Heart left ventricle (tissue), 16 donors: ENCODE measurements at regions of chr10 and their contacts with region 1.

Region 1: DNA sequence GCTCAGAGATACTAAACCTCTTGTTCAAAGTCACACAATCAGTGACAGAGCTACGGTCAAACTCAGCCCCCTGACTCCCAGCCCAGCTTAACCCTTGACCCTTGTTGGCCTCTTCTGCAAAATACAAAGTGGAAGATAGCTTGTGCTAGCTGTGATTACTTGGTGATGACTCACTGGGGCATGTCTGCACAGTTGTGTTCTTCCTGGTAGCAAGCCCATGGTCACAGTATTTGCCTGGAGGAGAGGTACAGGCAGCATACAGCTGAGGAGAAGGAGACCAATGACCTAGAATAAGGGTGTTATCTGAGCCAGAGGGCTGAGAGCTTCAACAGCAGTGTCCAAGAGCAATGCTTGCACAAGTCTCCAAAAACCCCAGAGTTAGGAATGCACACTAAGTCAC is 5.7 kb upstream of the HSPA12A start:
- DNase-seq: no peak
- ATAC-seq: peak in 1 of 4 donors; percentile 16
- H3K4me3 ChIP-seq: no peak overlapping the region
- H3K27ac ChIP-seq: no peak overlapping the region
- H3K4me1 ChIP-seq: peaks cover 0 to 7% (median 3%) of the 10 kb centered on the region in 12 donors
- H3K27me3 ChIP-seq: peaks cover 0 to 16% (median 0%) of the 10 kb centered on the region in 9 donors
- CTCF ChIP-seq: no peak
- POLR2A ChIP-seq: no peak

Region 2: GRCh38 chr10:116690356-116691322 is 57.4 kb before region 1 on chr10:
- intact Hi-C with region 1: loop called in 7 of 10 experiments (anchors 2 to 5 kb)
- DNase-seq: peak in 3 of 5 donors; percentile 54 to 63 (median 58)
- ATAC-seq: peak; percentile 46 to 66 (median 62)
- H3K4me3 ChIP-seq: peak overlapping the region in 1 of 12 donors; percentile 23
- H3K27ac ChIP-seq: peak overlapping the region in 10 of 12 donors; percentile 40 to 75 (median 52)
- H3K4me1 ChIP-seq: peaks cover 0 to 55% (median 42%) of the 10 kb centered on the region in 12 donors
- H3K27me3 ChIP-seq: no peaks in the 10 kb centered on the region
- CTCF ChIP-seq: peak in 11 of 12 donors; percentile 21 to 63 (median 38)
- POLR2A ChIP-seq: no peak